ENCODE measurements at regions of chr16 and their contacts with region 1.

Region 1: GRCh38 chr16:31458844-31459721 is at the start of gene ARMC5:
- DNase-seq: peak; percentile 95 to 99 (median 98)
- H3K4me3 ChIP-seq: peak within 1 kb of the TSS; percentile 66 to 100 (median 88)
- H3K27ac ChIP-seq: peak within 1 kb of the TSS; percentile 96 to 100 (median 100)
- H3K27me3 ChIP-seq: no peaks in the 10 kb centered on the region
- CTCF ChIP-seq: peak in 55 of 56 donors; percentile 32 to 84 (median 66)
- total RNA-seq, gene ARMC5: 10.4 to 21.8 (median 15.2) TPM

Region 2: GRCh38 chr16:31032736-31033708 is 426.1 kb before region 1 on chr16 and contains the start of gene STX4:
- intact Hi-C with region 1: loop called (anchors 5 kb)
- DNase-seq: peak; percentile 96 to 99 (median 98)
- H3K4me3 ChIP-seq: peak within 1 kb of the TSS; percentile 55 to 100 (median 96)
- H3K27ac ChIP-seq: peak within 1 kb of the TSS; percentile 85 to 100 (median 99)
- H3K27me3 ChIP-seq: no peaks in the 10 kb centered on the region
- CTCF ChIP-seq: peak in 20 of 56 donors; percentile 8 to 47 (median 20)
- total RNA-seq, gene STX4: 37.7 to 113 (median 67.3) TPM

Region 3: GRCh38 chr16:31117391-31118197 is 341.5 kb before region 1 on chr16 and contains the start of gene KAT8:
- intact Hi-C with region 1: loop called (anchors 5 to 10 kb)
- DNase-seq: peak; percentile 98 to 99 (median 99)
- H3K4me3 ChIP-seq: peak within 1 kb of the TSS; percentile 31 to 92 (median 78)
- H3K27ac ChIP-seq: peak within 1 kb of the TSS; percentile 59 to 97 (median 92)
- H3K27me3 ChIP-seq: no peaks in the 10 kb centered on the region
- CTCF ChIP-seq: peak in 6 of 56 donors; percentile 5 to 40 (median 16)
- total RNA-seq, gene KAT8: 58.1 to 99.4 (median 78.1) TPM

Region 4: DNA sequence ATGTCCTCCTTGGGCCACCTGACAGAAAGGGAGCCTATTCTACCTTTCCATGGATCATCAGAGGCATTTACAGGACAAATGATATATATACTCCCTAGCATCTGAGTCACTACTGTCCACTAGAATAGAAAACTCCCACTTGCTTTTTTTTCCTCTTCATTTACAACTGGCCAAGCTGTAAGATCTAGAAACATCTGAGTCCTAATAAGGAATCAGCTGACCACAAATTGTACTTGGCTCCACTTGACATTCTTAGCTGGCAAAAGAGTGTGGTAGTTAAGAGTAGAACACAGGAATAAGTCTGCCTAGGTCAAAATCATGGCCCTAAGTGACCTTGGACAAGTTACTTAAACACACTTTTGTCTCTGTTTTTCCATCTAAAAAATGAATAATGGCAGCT is 43.9 kb after region 1 on chr16:
- intact Hi-C with region 1: loop called (anchors 1 to 5 kb)
- DNase-seq: no peak
- H3K4me3 ChIP-seq: no peak overlapping the region
- H3K27ac ChIP-seq: no peak overlapping the region
- H3K27me3 ChIP-seq: no peaks in the 10 kb centered on the region
- CTCF ChIP-seq: no peak

Region 5: DNA sequence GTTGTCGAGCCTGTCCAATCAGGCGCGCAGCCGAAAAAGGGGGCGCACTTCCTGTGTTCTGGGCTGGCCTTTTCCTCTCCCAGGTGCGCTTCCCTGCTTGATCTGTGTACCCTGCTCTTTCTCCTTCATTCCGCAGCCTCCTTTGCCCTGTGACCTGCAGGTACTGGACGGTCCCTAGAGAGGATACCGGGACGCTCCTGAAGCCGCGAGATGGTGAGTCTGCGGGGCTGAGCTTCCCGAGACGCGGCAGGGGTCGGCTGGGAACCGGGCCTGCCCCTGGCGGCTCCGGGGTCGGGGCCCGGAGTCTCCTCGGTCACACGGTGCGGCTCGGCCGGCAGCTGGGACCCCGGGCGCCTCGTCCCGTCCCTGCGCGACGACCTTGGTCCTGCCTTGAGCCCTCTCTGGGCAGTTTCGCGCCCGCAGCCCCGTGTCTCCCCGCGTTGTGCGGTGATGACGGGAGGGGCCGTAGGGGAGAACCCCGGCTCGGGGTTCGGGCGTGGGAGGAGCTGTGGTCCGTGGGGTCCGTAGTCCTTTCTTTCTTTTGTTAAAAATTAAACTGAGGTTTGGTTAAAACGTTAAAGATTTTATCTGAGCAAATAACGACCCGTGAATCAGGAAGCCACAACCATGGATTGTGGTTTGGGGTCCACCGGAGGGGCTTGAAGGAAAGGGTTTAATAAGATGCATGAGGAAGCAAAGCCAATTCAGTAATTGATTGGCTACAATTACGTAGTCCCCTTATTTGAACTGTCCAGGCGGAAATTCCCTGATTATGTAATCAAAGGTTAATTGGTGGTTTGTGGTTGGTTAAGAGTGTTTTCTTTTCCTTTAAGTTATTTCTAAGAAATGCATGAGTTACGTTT is 241.7 kb after region 1 on chr16:
- intact Hi-C with region 1: loop called in 1 of 2 experiments (anchors 10 kb)
- DNase-seq: peak; percentile 67 to 95 (median 89)
- H3K4me3 ChIP-seq: peak overlapping the region; percentile 57 to 97 (median 88)
- H3K27ac ChIP-seq: peak overlapping the region in 34 of 59 donors; percentile 6 to 80 (median 50)
- H3K27me3 ChIP-seq: no peaks in the 10 kb centered on the region
- CTCF ChIP-seq: peak in 43 of 56 donors; percentile 9 to 59 (median 32)

Region 6: GRCh38 chr16:31873556-31874365 is 414.7 kb after region 1 on chr16 and contains the start of gene ZNF267:
- intact Hi-C with region 1: loop called (anchors 2 to 5 kb)
- DNase-seq: peak; percentile 80 to 95 (median 93)
- H3K4me3 ChIP-seq: peak within 1 kb of the TSS; percentile 77 to 100 (median 98)
- H3K27ac ChIP-seq: peak within 1 kb of the TSS in 57 of 59 donors; percentile 34 to 94 (median 84)
- H3K27me3 ChIP-seq: no peaks in the 10 kb centered on the region
- CTCF ChIP-seq: peak in 8 of 56 donors; percentile 2 to 36 (median 27)
- total RNA-seq, gene ZNF267: 6.4 to 23.6 (median 11.4) TPM